Dendritic cell treated with granulocyte-macrophage colony-stimulating factor and Interleukin-4, amounts not matched to agents 40 ng/mL and 50 ng/mL, for 4 days (primary cell): ENCODE measurements at regions of chr6 and their contacts with region 1.

Region 1: DNA sequence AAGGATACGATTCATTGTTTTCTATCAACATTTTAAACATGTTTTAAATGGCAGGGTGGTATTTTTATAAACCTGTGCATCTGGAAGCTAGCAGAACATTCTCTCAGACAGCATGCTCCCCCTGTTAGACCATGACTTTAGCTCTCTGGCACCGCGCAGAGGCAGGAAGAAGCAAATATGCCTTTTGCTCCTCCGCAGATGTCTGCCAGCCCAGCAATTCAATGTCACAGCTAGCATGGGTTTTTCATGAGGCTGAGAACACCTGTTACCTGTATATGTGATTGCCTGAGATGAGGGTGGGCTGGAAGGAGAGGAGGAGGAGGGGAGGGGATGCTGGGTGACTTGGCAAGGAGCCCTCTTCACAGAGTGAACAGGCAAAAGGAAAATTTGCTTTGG is 6.7 kb downstream of the MTCH1 start:
- H3K4me3 Mint-ChIP-seq: no peak overlapping the region
- H3K27ac Mint-ChIP-seq: no peak overlapping the region
- H3K4me1 Mint-ChIP-seq: peaks cover 47% of the 10 kb centered on the region
- H3K27me3 Mint-ChIP-seq: no peaks in the 10 kb centered on the region

Region 2: GRCh38 chr6:37018198-37019064 is 39.1 kb after region 1 on chr6:
- intact Hi-C with region 1: loop called (anchors 5 kb)
- H3K4me3 Mint-ChIP-seq: no peak overlapping the region
- H3K27ac Mint-ChIP-seq: peak overlapping the region; percentile 1
- H3K4me1 Mint-ChIP-seq: peaks cover 88% of the 10 kb centered on the region
- H3K27me3 Mint-ChIP-seq: no peaks in the 10 kb centered on the region

Region 3: GRCh38 chr6:37554480-37554819 is 575.1 kb after region 1 on chr6:
- intact Hi-C with region 1: no loop called
- H3K4me3 Mint-ChIP-seq: no peak overlapping the region
- H3K27ac Mint-ChIP-seq: no peak overlapping the region
- H3K4me1 Mint-ChIP-seq: no peaks in the 10 kb centered on the region
- H3K27me3 Mint-ChIP-seq: peaks cover 35% of the 10 kb centered on the region